ENCODE measurements at regions of chr11 and their contacts with region 1.

Region 1: GRCh38 chr11:128757235-128757711 is 63.4 kb downstream of the FLI1 start:
- DNase-seq: peak; percentile 92 to 98 (median 97)
- H3K4me3 ChIP-seq: no peak overlapping the region
- H3K27ac ChIP-seq: peak overlapping the region in 1 of 2 experiments; percentile 29
- H3K4me1 ChIP-seq: peaks cover 3 to 37% (median 14%) of the 10 kb centered on the region in 4 experiments
- H3K27me3 ChIP-seq: no peaks in the 10 kb centered on the region

Region 2: GRCh38 chr11:128670631-128671030 is 86.6 kb before region 1 on chr11:
- CTCF ChIA-PET with region 1: no interaction called
- POLR2A ChIA-PET with region 1: no interaction called
- DNase-seq: no peak
- H3K4me3 ChIP-seq: no peak overlapping the region
- H3K27ac ChIP-seq: no peak overlapping the region
- H3K4me1 ChIP-seq: peaks cover 10 to 51% (median 33%) of the 10 kb centered on the region in 4 experiments
- H3K27me3 ChIP-seq: no peaks in the 10 kb centered on the region

Region 3: GRCh38 chr11:128686745-128687177 is 70.5 kb before region 1 on chr11:
- CTCF ChIA-PET with region 1: interaction called, 13 read pairs
- POLR2A ChIA-PET with region 1: no interaction called
- DNase-seq: peak in 2 of 3 donors; percentile 69 to 80
- H3K4me3 ChIP-seq: peak overlapping the region; percentile 11 to 84 (median 68)
- H3K27ac ChIP-seq: peak overlapping the region in 1 of 2 experiments; percentile 61
- H3K4me1 ChIP-seq: peaks cover 2 to 78% (median 50%) of the 10 kb centered on the region in 4 experiments
- H3K27me3 ChIP-seq: no peaks in the 10 kb centered on the region

Region 4: GRCh38 chr11:128725630-128726319 is 31.5 kb before region 1 on chr11:
- CTCF ChIA-PET with region 1: interaction called, 14 read pairs
- POLR2A ChIA-PET with region 1: no interaction called
- DNase-seq: peak; percentile 87 to 98 (median 97)
- H3K4me3 ChIP-seq: peak overlapping the region in 6 of 7 experiments; percentile 23 to 64 (median 36)
- H3K27ac ChIP-seq: peak overlapping the region; percentile 36 to 54
- H3K4me1 ChIP-seq: peaks cover 55 to 98% (median 92%) of the 10 kb centered on the region in 4 experiments
- H3K27me3 ChIP-seq: no peaks in the 10 kb centered on the region

Region 5: DNA sequence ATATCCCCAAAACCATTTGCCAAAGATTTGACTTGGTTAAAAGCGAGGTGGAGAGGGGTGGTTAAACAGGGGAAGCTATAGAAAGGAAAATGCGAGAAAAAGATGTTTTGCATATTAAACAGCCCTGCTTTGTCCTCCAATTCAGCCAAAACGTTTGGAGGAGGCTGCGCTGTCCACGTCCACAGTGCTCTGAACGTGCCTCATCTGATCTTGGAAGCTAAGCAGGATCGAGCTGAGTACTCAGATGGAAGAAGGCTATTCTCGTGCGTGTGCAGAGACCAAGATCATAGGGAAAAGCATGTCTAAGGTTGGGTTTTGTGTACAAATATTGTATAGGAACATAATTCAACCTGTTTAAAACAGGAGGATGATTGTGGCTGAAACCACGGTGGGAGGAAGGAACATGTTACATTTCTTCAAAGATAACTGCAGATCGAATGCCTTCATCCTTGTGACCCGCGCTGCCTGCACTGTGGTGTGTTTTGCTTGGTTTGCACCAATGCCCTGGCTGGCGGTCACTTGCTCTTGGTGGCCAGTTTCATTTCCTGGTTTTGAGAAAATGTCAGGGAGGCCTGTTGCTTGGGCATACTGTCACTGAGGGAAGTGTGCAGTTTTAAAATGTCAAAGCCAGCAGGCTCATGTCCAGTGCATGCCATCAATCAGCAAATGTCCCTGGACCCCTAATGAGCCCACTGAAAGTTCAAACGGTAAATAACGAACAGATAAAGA is 23.0 kb before region 1 on chr11:
- CTCF ChIA-PET with region 1: interaction called, 29 read pairs
- POLR2A ChIA-PET with region 1: no interaction called
- DNase-seq: no peak
- H3K4me3 ChIP-seq: peak overlapping the region in 5 of 7 experiments; percentile 0 to 32 (median 24)
- H3K27ac ChIP-seq: no peak overlapping the region
- H3K4me1 ChIP-seq: peaks cover 66 to 98% (median 83%) of the 10 kb centered on the region in 4 experiments
- H3K27me3 ChIP-seq: no peaks in the 10 kb centered on the region

Region 6: GRCh38 chr11:128981254-128981653 is 224.0 kb after region 1 on chr11:
- CTCF ChIA-PET with region 1: no interaction called
- POLR2A ChIA-PET with region 1: no interaction called
- DNase-seq: no peak
- H3K4me3 ChIP-seq: no peak overlapping the region
- H3K27ac ChIP-seq: no peak overlapping the region
- H3K4me1 ChIP-seq: no peaks in the 10 kb centered on the region
- H3K27me3 ChIP-seq: no peaks in the 10 kb centered on the region